ENCODE measurements at regions of chr1 and their contacts with region 1.

Region 1: GRCh38 chr1:158124999-158125398 is 55.7 kb upstream of the CD1D start:
- ATAC-seq: peak; percentile 93 to 98 (median 96)
- H3K4me3 ChIP-seq: no peak overlapping the region
- H3K27ac ChIP-seq: no peak overlapping the region
- H3K4me1 ChIP-seq: peaks cover 7% of the 10 kb centered on the region in 2 donors

Region 2: DNA sequence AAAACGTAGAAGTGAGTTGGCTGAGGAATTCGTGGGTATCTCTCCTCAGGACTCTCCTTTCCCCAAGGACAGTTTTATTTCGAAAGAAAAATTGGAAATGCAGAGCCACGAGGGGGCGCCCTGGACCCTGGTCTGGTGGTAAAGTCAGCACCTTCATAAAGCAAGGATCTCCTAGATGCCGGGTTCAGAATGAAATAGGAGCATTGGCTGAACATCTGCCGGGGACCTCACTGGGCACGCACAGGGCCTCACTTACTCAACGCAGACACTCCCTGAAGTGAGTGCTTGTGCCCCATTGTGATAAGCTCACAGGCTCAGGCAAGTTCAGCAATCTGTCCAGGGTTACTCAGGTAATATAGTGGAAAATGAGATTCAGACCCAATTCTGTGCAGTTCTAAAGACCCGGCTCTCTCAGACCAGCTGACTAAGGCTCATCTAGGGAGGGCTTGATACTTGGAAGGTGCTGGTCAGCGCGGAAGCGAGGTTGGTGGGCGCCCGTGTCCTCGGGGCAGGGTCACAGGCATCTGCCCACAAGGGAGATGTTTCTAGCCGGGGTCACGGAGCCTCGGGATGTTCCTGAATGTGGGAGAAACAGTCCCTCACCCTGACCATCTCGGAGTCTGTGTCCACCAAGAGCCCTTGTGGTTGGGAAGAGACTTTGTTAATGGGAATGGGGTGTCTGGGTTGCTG is 931.2 kb before region 1 on chr1:
- in situ Hi-C with region 1: loop called in 1 of 9 experiments (anchors 25 kb)
- ATAC-seq: peak; percentile 43 to 79 (median 59)
- H3K4me3 ChIP-seq: no peak overlapping the region
- H3K27ac ChIP-seq: no peak overlapping the region
- H3K4me1 ChIP-seq: no peaks in the 10 kb centered on the region

Region 3: DNA sequence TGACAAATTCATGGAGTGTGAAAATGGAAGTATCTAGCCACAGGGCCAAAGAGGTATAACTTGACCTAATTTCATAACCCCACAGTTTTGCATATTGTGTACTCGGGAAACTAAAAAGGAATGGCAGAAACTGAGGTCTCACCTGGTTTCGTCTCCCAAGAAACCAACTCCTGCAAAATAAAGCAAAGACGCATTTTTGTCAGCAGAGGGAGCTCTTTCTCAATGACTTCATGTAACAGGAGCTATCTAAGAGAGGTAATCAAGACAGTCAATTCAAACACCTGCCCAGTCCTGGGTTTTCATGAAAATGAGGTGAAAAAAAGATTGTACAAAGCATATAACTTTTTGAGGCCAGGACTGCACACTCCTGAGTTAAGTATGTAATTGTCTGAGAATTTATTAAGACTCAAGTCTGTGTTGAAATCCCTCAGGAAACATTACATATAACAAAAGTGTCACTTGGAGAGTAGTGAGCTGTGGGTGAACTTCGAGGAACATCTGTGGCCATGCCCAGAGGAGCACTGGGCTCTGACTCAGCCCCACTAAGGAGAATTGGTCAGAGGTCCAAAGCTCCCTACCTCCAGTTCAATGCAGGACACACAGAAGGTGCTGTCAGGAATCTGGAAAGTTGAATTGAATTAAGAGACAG is 544.7 kb before region 1 on chr1:
- in situ Hi-C with region 1: loop called in 4 of 9 experiments (anchors 25 kb)
- ATAC-seq: peak in 7 of 8 experiments; percentile 39 to 71 (median 55)
- H3K4me3 ChIP-seq: no peak overlapping the region
- H3K27ac ChIP-seq: no peak overlapping the region
- H3K4me1 ChIP-seq: peaks cover 2% of the 10 kb centered on the region in 2 donors

Region 4: GRCh38 chr1:157963713-157964112 is 161.3 kb before region 1 on chr1:
- in situ Hi-C with region 1: loop called in 5 of 9 experiments (anchors 5 to 10 kb)
- ATAC-seq: peak; percentile 26 to 97 (median 56)
- H3K4me3 ChIP-seq: no peak overlapping the region
- H3K27ac ChIP-seq: no peak overlapping the region
- H3K4me1 ChIP-seq: peaks cover 31 to 36% of the 10 kb centered on the region in 2 donors

Region 5: DNA sequence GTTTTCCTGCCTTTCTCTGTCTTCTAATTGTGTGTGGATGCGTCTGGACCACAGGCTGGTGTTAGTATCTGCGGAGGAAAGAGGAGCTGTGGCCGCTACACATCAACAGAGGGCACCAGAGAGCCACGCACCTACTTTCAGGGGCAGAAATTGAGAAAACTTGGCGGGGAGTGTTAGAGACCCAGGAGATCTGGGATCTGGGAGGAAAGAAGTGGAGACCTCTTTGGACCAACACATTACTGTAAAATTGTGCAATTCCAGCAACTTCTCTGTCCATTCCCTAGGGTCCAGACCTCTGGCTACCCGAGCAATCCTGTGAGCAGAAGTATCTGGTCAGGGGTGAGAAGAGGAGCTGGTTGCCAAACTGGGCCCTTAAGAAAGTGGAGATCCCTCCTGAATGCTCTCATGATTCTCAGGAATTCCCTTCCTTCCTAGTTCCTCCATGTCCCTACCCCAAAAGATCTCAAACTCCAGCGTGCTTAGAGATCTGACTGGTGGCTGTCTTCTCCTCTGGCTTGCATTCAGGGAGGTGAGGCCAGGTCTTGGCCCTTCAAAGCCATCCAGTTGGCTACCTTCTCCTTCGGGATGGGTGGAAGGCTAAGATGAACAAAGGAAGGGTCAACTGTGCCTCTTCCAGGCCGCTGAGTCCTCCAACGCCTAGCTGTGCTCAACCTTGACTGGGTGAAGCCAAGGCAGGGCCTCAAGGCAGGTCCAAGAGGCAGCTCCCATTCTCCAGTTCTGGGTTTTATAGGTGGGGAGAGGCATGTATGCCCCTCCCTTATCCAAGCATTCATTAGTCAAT is 132.8 kb before region 1 on chr1:
- in situ Hi-C with region 1: loop called in 3 of 9 experiments (anchors 25 kb)
- ATAC-seq: peak; percentile 11 to 35 (median 18)
- H3K4me3 ChIP-seq: no peak overlapping the region
- H3K27ac ChIP-seq: no peak overlapping the region
- H3K4me1 ChIP-seq: peaks cover 28 to 44% of the 10 kb centered on the region in 2 donors